ENCODE measurements at regions of chr4 and their contacts with region 1.

Region 1: GRCh38 chr4:101451086-101451485 is 103.8 kb upstream of the PPP3CA start:
- DNase-seq: no peak
- CTCF ChIP-seq: no peak

Region 2: DNA sequence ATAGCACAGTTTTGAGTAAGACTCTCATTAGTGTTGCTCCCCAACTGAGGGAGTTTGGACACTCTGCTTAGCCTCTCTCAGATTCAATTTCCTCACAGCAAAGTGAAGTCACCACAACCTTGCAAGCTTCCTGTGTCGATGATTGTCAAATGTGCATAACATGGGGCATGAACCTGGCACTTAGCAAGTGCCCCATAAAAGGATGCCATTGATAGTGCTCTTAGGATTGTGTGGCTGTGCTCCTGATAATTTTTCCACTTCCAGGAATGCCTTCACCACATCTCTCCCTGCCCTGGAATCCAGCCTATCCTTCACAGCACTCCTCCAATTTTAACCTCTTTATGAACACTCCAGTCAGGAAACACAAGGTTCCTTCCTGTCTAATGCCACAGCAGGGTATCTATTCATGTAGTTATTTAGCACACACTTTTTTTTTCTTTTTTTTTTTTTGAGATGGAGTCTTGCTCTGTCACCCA is 413.1 kb before region 1 on chr4:
- CTCF ChIA-PET with region 1: no interaction called
- POLR2A ChIA-PET with region 1: no interaction called
- DNase-seq: no peak
- CTCF ChIP-seq: no peak

Region 3: GRCh38 chr4:101145021-101145420 is 306.1 kb before region 1 on chr4:
- CTCF ChIA-PET with region 1: no interaction called
- POLR2A ChIA-PET with region 1: no interaction called
- DNase-seq: no peak
- CTCF ChIP-seq: no peak

Region 4: DNA sequence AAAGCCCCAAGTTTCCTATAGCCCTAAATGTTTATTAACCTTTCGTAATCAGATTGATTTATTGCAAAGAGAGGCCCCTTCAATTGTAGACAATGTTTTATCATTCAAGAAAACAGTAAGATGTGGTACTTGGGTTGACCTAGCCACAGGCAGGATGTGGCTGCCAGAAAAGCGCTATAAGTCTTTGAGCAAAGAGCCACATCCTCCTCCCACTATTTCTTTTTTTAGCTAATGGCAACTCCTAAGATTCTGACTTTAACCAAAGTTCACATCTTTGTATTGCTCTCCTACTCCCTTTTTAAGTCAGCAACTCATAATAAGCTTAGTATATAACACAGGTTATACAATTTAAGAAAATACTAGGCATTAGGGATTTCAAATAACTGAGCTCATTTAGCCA is 33.0 kb before region 1 on chr4:
- CTCF ChIA-PET with region 1: interaction called, 11 read pairs
- POLR2A ChIA-PET with region 1: no interaction called
- DNase-seq: peak; percentile 45
- CTCF ChIP-seq: no peak

Region 5: GRCh38 chr4:101475246-101475645 is 24.2 kb after region 1 on chr4:
- CTCF ChIA-PET with region 1: interaction called, 10 read pairs
- POLR2A ChIA-PET with region 1: no interaction called
- DNase-seq: no peak
- CTCF ChIP-seq: no peak

Region 6: DNA sequence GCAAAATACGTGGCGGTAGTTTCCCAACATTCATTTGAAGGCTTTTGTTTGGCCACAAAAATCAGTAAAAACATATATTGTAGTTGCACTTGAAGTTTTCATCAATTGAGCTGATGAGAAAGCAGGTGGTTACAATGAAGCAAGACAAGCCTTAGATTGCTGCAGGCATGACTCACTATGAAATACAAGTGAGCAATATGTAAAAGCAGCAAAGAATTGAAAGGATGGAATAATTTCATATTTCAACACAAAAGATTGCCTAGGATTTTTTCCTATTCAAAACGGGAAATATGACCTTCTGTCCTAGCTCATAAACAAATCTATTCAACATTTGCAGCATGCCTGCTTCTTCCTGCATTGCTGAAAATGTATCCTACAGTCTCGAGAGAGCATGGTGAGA is 148.5 kb after region 1 on chr4:
- CTCF ChIA-PET with region 1: no interaction called
- POLR2A ChIA-PET with region 1: no interaction called
- DNase-seq: no peak
- CTCF ChIP-seq: no peak

Measured in GM10248 (cell line).